Panc1 (cell line): ENCODE measurements at regions of chr5 and their contacts with region 1.

Region 1: GRCh38 chr5:65925601-65926275 is 637 bp upstream of the ERBIN start:
- DNase-seq: no peak
- ATAC-seq: peak; percentile 93
- H3K4me3 ChIP-seq: peak overlapping the region; percentile 97 to 99
- H3K27ac ChIP-seq: peak overlapping the region; percentile 91
- H3K4me1 ChIP-seq: peaks cover 36% of the 10 kb centered on the region
- H3K27me3 ChIP-seq: no peaks in the 10 kb centered on the region
- CTCF ChIP-seq: peak; percentile 80

Region 2: GRCh38 chr5:65742565-65743231 is 183.0 kb before region 1 on chr5:
- CTCF ChIA-PET with region 1: no interaction called
- POLR2A ChIA-PET with region 1: no interaction called
- in situ Hi-C with region 1: no loop called
- intact Hi-C with region 1: loop called (anchors 10 kb)
- DNase-seq: no peak
- ATAC-seq: peak; percentile 82
- H3K4me3 ChIP-seq: no peak overlapping the region
- H3K27ac ChIP-seq: no peak overlapping the region
- H3K4me1 ChIP-seq: no peaks in the 10 kb centered on the region; the same call in 1 of the 2 replicates
- H3K27me3 ChIP-seq: no peaks in the 10 kb centered on the region
- CTCF ChIP-seq: peak; percentile 73; the same call in 1 of the 2 replicates

Region 3: DNA sequence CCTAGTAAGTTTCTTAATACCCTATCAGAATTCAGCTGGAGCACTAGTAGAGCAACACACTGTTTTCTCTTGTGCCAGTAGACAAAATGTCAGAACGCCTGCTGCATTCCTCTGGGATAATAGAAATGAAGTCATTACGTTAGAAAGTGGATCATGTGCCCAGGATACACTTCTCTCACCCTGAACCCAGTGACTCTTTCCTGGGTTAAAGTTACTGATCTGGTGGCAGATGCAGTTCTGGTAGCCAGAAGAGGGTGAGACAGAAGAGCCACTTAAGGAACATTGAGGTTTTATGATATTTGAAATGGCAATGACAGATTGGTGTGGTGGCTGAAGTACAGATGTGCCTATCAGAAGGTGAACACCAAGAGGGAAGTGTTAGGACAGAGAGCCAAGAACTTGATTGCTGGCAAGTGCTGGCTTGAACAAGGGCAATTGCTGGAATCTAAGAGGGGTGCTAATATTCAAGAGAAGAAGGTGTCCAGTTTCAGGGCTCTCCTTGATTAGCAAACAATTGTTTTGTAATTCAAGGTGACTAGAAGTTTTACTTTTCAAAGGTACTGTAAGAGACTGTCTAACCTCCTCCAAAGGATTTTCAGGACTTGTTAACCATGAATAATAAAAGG is 93.0 kb before region 1 on chr5:
- CTCF ChIA-PET with region 1: no interaction called
- POLR2A ChIA-PET with region 1: interaction called, 13 read pairs
- in situ Hi-C with region 1: no loop called
- intact Hi-C with region 1: no loop called
- DNase-seq: no peak
- ATAC-seq: no peak
- H3K4me3 ChIP-seq: no peak overlapping the region
- H3K27ac ChIP-seq: no peak overlapping the region
- H3K4me1 ChIP-seq: no peaks in the 10 kb centered on the region
- H3K27me3 ChIP-seq: no peaks in the 10 kb centered on the region
- CTCF ChIP-seq: no peak

Region 4: GRCh38 chr5:65856520-65856919 is 69.2 kb before region 1 on chr5:
- CTCF ChIA-PET with region 1: interaction called, 8 read pairs
- POLR2A ChIA-PET with region 1: interaction called, 11 read pairs
- in situ Hi-C with region 1: no loop called
- intact Hi-C with region 1: no loop called
- DNase-seq: no peak
- ATAC-seq: no peak
- H3K4me3 ChIP-seq: no peak overlapping the region
- H3K27ac ChIP-seq: no peak overlapping the region
- H3K4me1 ChIP-seq: no peaks in the 10 kb centered on the region
- H3K27me3 ChIP-seq: no peaks in the 10 kb centered on the region
- CTCF ChIP-seq: no peak

Region 5: GRCh38 chr5:66074901-66075300 is 149.2 kb after region 1 on chr5:
- CTCF ChIA-PET with region 1: no interaction called
- POLR2A ChIA-PET with region 1: interaction called, 22 read pairs
- in situ Hi-C with region 1: no loop called
- intact Hi-C with region 1: no loop called
- DNase-seq: no peak
- ATAC-seq: no peak
- H3K4me3 ChIP-seq: no peak overlapping the region
- H3K27ac ChIP-seq: no peak overlapping the region
- H3K4me1 ChIP-seq: no peaks in the 10 kb centered on the region
- H3K27me3 ChIP-seq: no peaks in the 10 kb centered on the region
- CTCF ChIP-seq: no peak

Region 6: GRCh38 chr5:66144074-66144833 is 218.5 kb after region 1 on chr5 and contains the start of gene SREK1:
- CTCF ChIA-PET with region 1: no interaction called
- POLR2A ChIA-PET with region 1: interaction called, 11 read pairs
- in situ Hi-C with region 1: no loop called
- intact Hi-C with region 1: no loop called
- DNase-seq: peak; percentile 79
- ATAC-seq: peak; percentile 95
- H3K4me3 ChIP-seq: peak within 1 kb of the TSS; percentile 86 to 91
- H3K27ac ChIP-seq: peak within 1 kb of the TSS; percentile 99
- H3K4me1 ChIP-seq: peaks cover 26% of the 10 kb centered on the region
- H3K27me3 ChIP-seq: no peaks in the 10 kb centered on the region
- CTCF ChIP-seq: no peak
- total RNA-seq, gene SREK1: 89.7 TPM

Region 7: DNA sequence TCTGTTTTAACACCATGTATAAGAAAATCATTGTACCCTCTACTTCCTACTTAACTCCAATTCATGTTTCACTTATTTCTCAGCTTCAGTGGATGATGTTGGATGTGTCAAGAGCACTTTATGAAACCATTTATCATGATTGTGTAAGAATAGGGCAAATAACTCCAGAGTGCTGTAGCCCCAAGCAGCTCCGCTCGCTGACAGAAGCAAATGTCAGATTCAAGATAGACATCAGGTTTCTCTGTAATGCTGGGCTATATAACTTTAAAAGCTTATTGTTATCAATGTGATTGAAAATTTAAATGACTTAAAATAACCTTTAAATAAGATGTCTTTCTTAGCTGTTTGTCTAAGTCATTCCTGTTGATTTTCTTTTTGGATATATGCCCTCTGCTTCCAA is 720.9 kb after region 1 on chr5:
- CTCF ChIA-PET with region 1: no interaction called
- POLR2A ChIA-PET with region 1: no interaction called
- in situ Hi-C with region 1: no loop called
- intact Hi-C with region 1: no loop called
- DNase-seq: no peak
- ATAC-seq: no peak
- H3K4me3 ChIP-seq: no peak overlapping the region
- H3K27ac ChIP-seq: no peak overlapping the region
- H3K4me1 ChIP-seq: no peaks in the 10 kb centered on the region
- H3K27me3 ChIP-seq: peaks cover 4% of the 10 kb centered on the region; the same call in 1 of the 2 replicates
- CTCF ChIP-seq: no peak